MCF 10A (cell line): ENCODE measurements at regions of chr4 and their contacts with region 1.

Region 1: DNA sequence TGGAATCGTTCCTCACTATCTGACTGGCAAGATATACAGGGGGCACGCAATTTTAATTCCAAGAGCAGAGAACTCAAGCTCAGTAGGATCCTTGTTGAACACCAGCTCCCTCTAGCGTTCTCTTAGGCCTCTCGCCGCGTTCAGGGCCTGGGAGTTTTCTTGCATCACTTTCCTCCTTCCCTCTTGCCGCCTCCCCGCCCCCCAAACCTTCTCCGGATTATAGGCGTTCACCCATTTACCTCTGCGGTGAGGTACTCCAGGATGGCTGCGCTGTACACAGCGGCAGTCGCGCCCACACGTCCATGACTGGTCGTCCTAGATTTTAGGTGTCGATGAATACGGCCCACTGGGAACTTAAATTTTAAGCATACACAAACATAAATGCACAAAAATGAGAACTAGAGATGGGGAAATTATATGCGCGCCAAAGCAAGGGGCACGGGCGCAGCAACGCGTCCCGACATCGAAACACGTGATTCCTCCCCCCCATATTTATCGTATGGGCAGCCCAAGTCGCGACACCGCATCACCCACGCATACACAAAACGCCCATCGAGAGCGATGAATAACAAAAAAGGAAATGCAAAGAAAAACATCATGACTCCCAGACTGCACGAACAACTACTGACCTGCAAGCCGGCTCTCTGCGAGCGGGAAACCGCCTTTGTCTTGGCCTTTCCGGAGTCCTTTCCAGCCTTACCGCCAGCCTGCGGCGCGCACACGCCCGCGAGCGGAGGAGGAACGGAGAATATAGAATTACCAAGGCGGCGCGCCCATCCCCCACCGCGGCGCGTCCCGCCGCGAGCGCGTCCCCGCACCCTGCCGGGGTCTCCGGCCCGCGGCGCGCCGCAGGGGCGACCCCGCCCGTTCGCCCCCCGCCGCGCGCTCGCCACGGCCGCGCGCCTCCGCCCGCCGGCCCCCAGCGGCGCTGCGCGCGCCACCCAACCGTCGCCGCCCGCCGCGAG is 759 bp downstream of the H2AZ1 start:
- DNase-seq: peak; percentile 99
- H3K4me3 Mint-ChIP-seq: no peak overlapping the region
- H3K27ac Mint-ChIP-seq: no peak overlapping the region
- H3K4me1 Mint-ChIP-seq: peaks cover 11% of the 10 kb centered on the region
- H3K27me3 Mint-ChIP-seq: no peaks in the 10 kb centered on the region
- CTCF ChIP-seq: peak; percentile 76

Region 2: GRCh38 chr4:99563310-99564186 is 385.8 kb before region 1 on chr4 and contains the start of gene TRMT10A:
- CTCF ChIA-PET with region 1: interaction called, 3 read pairs
- POLR2A ChIA-PET with region 1: interaction called, 14 read pairs
- intact Hi-C with region 1: loop called (anchors 1 kb)
- DNase-seq: peak; percentile 97
- H3K4me3 Mint-ChIP-seq: peak within 1 kb of the TSS; percentile 93
- H3K27ac Mint-ChIP-seq: peak within 1 kb of the TSS; percentile 100
- H3K4me1 Mint-ChIP-seq: no peaks in the 10 kb centered on the region
- H3K27me3 Mint-ChIP-seq: peaks cover 15% of the 10 kb centered on the region
- CTCF ChIP-seq: no peak
- total RNA-seq, gene TRMT10A: 17.7 and 19.1 TPM in 2 replicates

Region 3: DNA sequence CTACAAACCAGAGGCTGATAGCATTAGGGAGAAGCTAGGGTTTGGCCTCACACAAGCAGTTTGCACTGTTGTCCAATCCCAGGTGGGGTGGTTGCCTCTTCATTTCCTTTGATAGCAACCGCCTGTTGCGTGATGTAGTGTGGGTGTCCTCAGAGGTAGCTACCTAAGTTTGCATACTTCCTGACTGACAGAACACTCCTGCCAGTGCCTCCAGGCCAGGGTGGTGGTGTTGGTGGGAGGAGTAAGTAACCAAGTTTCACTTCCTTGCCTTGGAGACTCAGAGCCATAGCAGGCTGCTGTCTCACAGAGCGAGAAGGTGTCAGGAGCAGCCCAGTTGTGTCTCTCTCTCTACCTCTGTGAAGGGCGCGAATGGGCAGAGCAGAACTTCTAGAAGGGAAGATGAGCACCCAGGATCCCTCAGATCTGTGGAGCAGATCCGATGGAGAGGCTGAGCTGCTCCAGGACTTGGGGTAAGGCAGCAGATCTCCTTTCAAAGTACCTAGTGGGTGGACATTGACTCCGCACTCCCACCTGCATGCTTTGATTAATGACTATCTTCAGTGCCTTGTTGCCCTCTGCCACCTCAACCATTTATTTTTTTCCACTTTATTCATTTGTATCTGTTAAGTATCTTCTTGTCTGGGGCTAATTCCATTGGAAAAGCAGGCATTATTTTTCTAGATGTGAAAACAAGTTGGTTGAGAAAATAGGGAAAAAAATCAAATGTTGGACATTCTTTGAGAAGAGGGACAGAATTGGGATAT is 132.6 kb before region 1 on chr4 and contains the start of gene DAPP1:
- CTCF ChIA-PET with region 1: interaction called, 8 read pairs
- POLR2A ChIA-PET with region 1: interaction called, 31 read pairs
- intact Hi-C with region 1: loop called (anchors 1 kb)
- DNase-seq: peak; percentile 92
- H3K4me3 Mint-ChIP-seq: peak within 1 kb of the TSS; percentile 72
- H3K27ac Mint-ChIP-seq: peak within 1 kb of the TSS; percentile 11
- H3K4me1 Mint-ChIP-seq: peaks cover 36% of the 10 kb centered on the region
- H3K27me3 Mint-ChIP-seq: no peaks in the 10 kb centered on the region
- CTCF ChIP-seq: no peak
- total RNA-seq, gene DAPP1: 17.6 and 24.7 TPM in 2 replicates

Region 4: GRCh38 chr4:99894161-99894997 is 54.9 kb before region 1 on chr4 and contains the start of gene LAMTOR3:
- CTCF ChIA-PET with region 1: interaction called, 10 read pairs
- POLR2A ChIA-PET with region 1: interaction called, 62 read pairs
- intact Hi-C with region 1: no loop called
- DNase-seq: peak; percentile 92
- H3K4me3 Mint-ChIP-seq: peak within 1 kb of the TSS; percentile 96
- H3K27ac Mint-ChIP-seq: peak within 1 kb of the TSS; percentile 98
- H3K4me1 Mint-ChIP-seq: peaks cover 27% of the 10 kb centered on the region
- H3K27me3 Mint-ChIP-seq: no peaks in the 10 kb centered on the region
- CTCF ChIP-seq: no peak
- total RNA-seq, gene LAMTOR3: 33.5 and 35.9 TPM in 2 replicates

Region 5: DNA sequence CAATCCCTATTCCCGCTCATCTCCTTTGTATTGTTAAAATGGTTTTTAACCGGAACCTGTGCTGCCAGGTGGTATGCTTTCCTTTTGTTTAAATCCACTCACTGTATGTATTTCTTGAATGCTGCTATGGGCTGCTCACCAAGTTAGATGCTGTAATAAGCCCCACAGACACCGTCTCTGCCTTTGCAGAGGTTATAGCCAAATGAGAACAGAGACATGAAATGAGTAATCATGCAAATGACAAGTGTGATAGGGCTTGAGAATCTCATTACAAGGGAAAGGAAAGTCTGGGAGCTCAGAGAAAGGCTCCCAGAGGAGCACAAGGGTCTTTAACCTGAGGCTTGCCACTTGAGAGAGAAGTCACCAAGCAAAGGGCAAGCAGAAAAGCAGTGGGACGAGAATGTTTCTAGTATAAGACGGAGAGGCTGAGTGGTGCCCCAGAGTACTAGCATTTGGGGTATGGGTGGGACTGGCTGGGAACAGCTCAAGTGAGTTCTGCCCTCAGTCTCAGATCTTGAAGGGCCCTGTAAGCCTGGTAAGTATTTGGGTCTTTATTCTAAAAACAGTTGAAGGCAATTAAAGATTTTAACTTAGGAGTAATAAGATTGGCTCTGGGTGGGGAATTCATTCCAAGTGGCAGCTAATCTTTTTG is 111.6 kb after region 1 on chr4:
- CTCF ChIA-PET with region 1: no interaction called
- POLR2A ChIA-PET with region 1: interaction called, 3 read pairs
- intact Hi-C with region 1: loop called (anchors 1 kb)
- DNase-seq: no peak
- H3K4me3 Mint-ChIP-seq: no peak overlapping the region
- H3K27ac Mint-ChIP-seq: no peak overlapping the region
- H3K4me1 Mint-ChIP-seq: no peaks in the 10 kb centered on the region
- H3K27me3 Mint-ChIP-seq: no peaks in the 10 kb centered on the region
- CTCF ChIP-seq: no peak